PC-3 (cell line): ENCODE measurements at regions of chr13 and their contacts with region 1.

Region 1: GRCh38 chr13:29902101-29902952 is 51.9 kb upstream of the UBL3 start:
- DNase-seq: peak; percentile 85
- ATAC-seq: peak; percentile 72
- H3K4me3 ChIP-seq: no peak overlapping the region
- H3K27ac ChIP-seq: no peak overlapping the region
- H3K4me1 ChIP-seq: peaks cover 24% of the 10 kb centered on the region
- H3K27me3 ChIP-seq: no peaks in the 10 kb centered on the region
- CTCF ChIP-seq: no peak

Region 2: DNA sequence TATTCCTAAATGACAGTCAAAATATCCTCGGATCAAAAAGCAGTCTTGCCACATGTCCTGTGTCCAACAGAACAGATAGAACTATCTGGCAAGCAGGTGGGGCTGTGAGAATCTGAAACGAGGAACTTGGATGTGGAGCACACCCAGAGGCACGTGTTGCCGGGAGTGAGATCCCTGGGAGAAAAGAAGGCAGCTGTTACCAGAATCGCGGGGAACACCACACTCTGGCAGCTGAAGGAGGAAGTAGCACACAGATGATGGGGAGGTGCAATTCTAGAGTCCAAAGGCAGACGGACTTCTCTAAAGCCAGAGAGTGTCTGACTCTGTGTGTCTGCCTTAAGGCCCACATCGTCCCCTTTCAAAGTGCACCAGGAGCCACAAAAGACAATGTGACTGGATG is 329.1 kb before region 1 on chr13:
- CTCF ChIA-PET with region 1: no interaction called
- POLR2A ChIA-PET with region 1: no interaction called
- intact Hi-C with region 1: no loop called
- DNase-seq: no peak
- ATAC-seq: no peak
- H3K4me3 ChIP-seq: no peak overlapping the region
- H3K27ac ChIP-seq: no peak overlapping the region
- H3K4me1 ChIP-seq: 0 out of 2 replicates have a peak, but pooled peaks cover 8% of the 10 kb centered on the region
- H3K27me3 ChIP-seq: no peaks in the 10 kb centered on the region
- CTCF ChIP-seq: no peak

Region 3: GRCh38 chr13:29850224-29850898 is 52.0 kb before region 1 on chr13 and contains the start of gene UBL3:
- CTCF ChIA-PET with region 1: no interaction called
- POLR2A ChIA-PET with region 1: no interaction called
- intact Hi-C with region 1: loop called (anchors 5 kb)
- DNase-seq: peak; percentile 93
- ATAC-seq: peak; percentile 72
- H3K4me3 ChIP-seq: peak within 1 kb of the TSS; percentile 94
- H3K27ac ChIP-seq: peak within 1 kb of the TSS; percentile 82
- H3K4me1 ChIP-seq: peaks cover 40% of the 10 kb centered on the region
- H3K27me3 ChIP-seq: no peaks in the 10 kb centered on the region
- CTCF ChIP-seq: no peak
- total RNA-seq, gene UBL3: 10.9 and 13.9 TPM in 2 replicates

Region 4: DNA sequence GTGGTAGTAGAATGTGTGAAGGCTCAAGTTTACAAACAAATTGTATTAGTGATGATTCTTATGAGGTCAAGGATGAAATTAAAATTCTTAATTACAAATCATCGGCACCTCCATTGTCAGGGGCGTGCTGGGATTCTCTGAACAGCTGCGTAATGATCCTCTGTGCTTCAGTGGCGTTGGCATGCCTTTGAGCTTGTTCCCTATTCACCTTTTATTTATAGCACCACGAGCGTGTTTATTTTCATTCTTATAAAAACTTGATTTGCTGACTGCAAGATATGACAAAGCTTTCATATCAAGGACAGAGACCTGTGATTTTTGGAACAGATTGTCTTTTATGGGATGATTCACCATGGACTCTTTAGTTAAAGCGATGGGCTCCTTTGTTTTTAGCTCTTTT is 33.7 kb before region 1 on chr13:
- CTCF ChIA-PET with region 1: interaction called, 4 read pairs
- POLR2A ChIA-PET with region 1: no interaction called
- intact Hi-C with region 1: loop called (anchors 5 kb)
- DNase-seq: no peak
- ATAC-seq: peak; percentile 59
- H3K4me3 ChIP-seq: no peak overlapping the region
- H3K27ac ChIP-seq: no peak overlapping the region
- H3K4me1 ChIP-seq: no peaks in the 10 kb centered on the region
- H3K27me3 ChIP-seq: no peaks in the 10 kb centered on the region
- CTCF ChIP-seq: no peak